ENCODE measurements at regions of chr3 and their contacts with region 1.

Region 1: GRCh38 chr3:67561667-67562394 is 92.6 kb downstream of the SUCLG2 start:
- DNase-seq: no peak

Region 2: DNA sequence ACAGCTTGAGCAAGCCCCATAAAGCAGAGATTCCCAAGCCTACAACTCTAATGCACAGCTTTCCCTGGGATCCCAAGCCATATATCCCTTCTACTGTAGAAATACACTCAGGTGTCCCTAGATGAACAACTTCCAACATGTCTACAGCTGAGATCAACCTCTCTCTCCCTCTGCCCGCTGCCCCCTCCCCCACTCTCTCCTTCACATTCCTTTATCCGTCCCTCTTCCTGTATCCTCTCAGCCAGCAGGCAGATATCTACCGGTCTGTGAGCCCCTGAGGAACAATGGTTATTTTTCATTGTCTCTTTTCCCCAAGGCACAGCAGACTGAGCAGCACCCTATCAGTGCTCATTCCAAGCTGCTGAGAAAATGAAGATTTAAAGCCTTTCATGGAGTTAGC is 46.1 kb before region 1 on chr3:
- intact Hi-C with region 1: loop called in 1 of 2 experiments (anchors 2 kb)
- DNase-seq: no peak